ENCODE measurements at regions of chr15 and their contacts with region 1.

Region 1: GRCh38 chr15:60660290-60661051 is 181.5 kb upstream of the ICE2 start:
- DNase-seq: peak in 1 of 2 donors; percentile 66
- H3K4me3 ChIP-seq: peak overlapping the region in 1 of 2 donors; percentile 30
- H3K27ac ChIP-seq: peak overlapping the region; percentile 57 to 65
- H3K4me1 ChIP-seq: peaks cover 0 to 7% of the 10 kb centered on the region in 2 donors
- H3K27me3 ChIP-seq: no peaks in the 10 kb centered on the region
- CTCF ChIP-seq: no peak

Region 2: DNA sequence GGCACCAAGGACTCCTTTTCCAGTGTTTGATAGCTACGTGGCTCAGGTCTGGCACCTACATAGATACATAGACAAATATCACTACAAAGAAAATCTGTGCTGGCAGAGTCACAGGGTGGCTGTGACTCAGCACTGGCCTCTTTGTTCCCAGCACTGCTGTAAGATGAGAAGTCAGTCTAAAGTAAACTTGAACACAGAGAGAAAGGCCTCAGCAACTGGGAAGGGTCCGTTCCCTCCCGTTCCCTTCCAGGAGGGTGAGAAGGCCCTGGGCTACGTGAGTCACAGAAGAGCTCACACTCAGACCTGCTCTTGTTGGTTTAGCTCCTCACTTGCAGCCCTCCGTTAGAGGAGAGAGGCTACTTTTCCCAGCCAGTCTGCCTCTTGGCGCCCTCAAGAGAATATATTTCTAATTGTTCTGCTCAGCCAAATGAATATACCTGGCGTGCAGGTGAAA is 285.8 kb before region 1 on chr15:
- intact Hi-C with region 1: no loop called
- DNase-seq: peak; percentile 57 to 93
- H3K4me3 ChIP-seq: peak overlapping the region in 1 of 2 donors; percentile 40
- H3K27ac ChIP-seq: peak overlapping the region; percentile 90 to 96
- H3K4me1 ChIP-seq: peaks cover 46 to 85% of the 10 kb centered on the region in 2 donors
- H3K27me3 ChIP-seq: no peaks in the 10 kb centered on the region
- CTCF ChIP-seq: no peak

Region 3: GRCh38 chr15:60751985-60752952 is 91.8 kb after region 1 on chr15:
- intact Hi-C with region 1: no loop called
- DNase-seq: peak in 1 of 2 donors; percentile 74
- H3K4me3 ChIP-seq: peak overlapping the region; percentile 12 to 45
- H3K27ac ChIP-seq: peak overlapping the region; percentile 71 to 75
- H3K4me1 ChIP-seq: peaks cover 0 to 5% of the 10 kb centered on the region in 2 donors
- H3K27me3 ChIP-seq: no peaks in the 10 kb centered on the region
- CTCF ChIP-seq: no peak

Region 4: GRCh38 chr15:60916679-60917460 is 256.4 kb after region 1 on chr15:
- intact Hi-C with region 1: loop called (anchors 5 kb)
- DNase-seq: peak; percentile 40 to 91
- H3K4me3 ChIP-seq: peak overlapping the region; percentile 25 to 56
- H3K27ac ChIP-seq: peak overlapping the region; percentile 72 to 87
- H3K4me1 ChIP-seq: peaks cover 0 to 16% of the 10 kb centered on the region in 2 donors
- H3K27me3 ChIP-seq: no peaks in the 10 kb centered on the region
- CTCF ChIP-seq: peak; percentile 76 to 84 (median 78)